A673 (cell line): ENCODE measurements at regions of chr18 and their contacts with region 1.

Region 1: GRCh38 chr18:26771524-26771923 is 94.0 kb downstream of the AQP4 start:
- DNase-seq: no peak
- H3K4me3 ChIP-seq: no peak overlapping the region
- H3K27ac ChIP-seq: no peak overlapping the region
- H3K4me1 ChIP-seq: no peaks in the 10 kb centered on the region
- H3K27me3 ChIP-seq: peaks cover 5% of the 10 kb centered on the region
- CTCF ChIP-seq: 0 out of 2 replicates have a peak, but pooled peaks have one; percentile 19

Region 2: DNA sequence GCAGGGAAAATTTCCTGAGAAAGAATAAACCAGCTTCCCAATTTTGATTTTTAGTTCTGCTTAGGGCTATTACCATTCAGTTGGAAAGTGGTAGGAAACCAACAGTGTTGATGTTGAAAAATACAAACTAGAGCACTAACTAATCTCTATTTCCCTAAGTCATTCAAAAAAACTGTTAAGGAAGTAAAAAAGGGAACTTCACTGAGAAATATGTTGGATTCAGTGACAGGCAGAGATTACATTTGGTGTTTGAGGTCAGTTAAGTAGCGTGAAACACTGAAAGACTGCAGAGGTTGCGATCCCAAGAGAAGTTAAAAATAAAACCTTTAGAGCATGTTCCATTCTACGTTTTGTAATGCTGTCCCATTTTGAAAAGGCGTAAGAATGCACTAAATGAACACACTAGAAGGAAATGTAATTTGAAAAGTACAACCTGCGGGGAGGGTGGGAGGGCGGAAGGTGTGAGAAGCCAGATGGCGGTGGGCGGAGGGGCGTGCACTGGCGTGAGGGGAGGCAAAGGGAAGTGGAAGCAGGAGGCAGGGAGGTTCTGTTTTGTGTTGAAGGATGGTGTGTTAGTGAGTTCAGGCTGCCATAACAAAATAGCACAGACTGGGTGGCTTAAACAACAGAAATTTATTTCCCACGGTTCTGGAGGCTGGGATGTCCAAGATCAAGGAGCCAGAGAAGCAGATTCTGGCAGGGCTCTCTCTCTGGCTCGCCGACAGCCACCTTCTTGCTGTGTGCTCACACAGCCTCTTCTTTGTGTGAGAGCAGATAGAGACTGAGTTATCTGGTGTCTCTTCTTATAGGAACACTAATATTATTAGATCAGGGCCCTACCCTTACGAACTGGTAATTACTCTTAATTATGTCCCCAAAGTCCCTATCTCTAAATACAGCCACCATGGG is 128.8 kb before region 1 on chr18:
- CTCF ChIA-PET with region 1: no interaction called
- POLR2A ChIA-PET with region 1: no interaction called
- intact Hi-C with region 1: no loop called
- DNase-seq: no peak
- H3K4me3 ChIP-seq: no peak overlapping the region
- H3K27ac ChIP-seq: no peak overlapping the region
- H3K4me1 ChIP-seq: no peaks in the 10 kb centered on the region
- H3K27me3 ChIP-seq: peaks cover 31% of the 10 kb centered on the region
- CTCF ChIP-seq: no peak

Region 3: GRCh38 chr18:26741041-26741440 is 30.5 kb before region 1 on chr18:
- CTCF ChIA-PET with region 1: no interaction called
- POLR2A ChIA-PET with region 1: interaction called, 17 read pairs
- intact Hi-C with region 1: no loop called
- DNase-seq: no peak
- H3K4me3 ChIP-seq: no peak overlapping the region
- H3K27ac ChIP-seq: no peak overlapping the region
- H3K4me1 ChIP-seq: no peaks in the 10 kb centered on the region
- H3K27me3 ChIP-seq: no peaks in the 10 kb centered on the region
- CTCF ChIP-seq: no peak